Heart right ventricle (tissue), 16 donors: ENCODE measurements at regions of chr7 and their contacts with region 1.

Region 1: GRCh38 chr7:75928331-75928909 is 13.5 kb downstream of the POR start:
- DNase-seq: no peak
- ATAC-seq: peak in 1 of 8 donors; percentile 19
- H3K4me3 ChIP-seq: no peak overlapping the region
- H3K27ac ChIP-seq: no peak overlapping the region
- H3K4me1 ChIP-seq: peaks cover 0 to 35% (median 21%) of the 10 kb centered on the region in 9 donors
- H3K27me3 ChIP-seq: no peaks in the 10 kb centered on the region
- CTCF ChIP-seq: no peak

Region 2: DNA sequence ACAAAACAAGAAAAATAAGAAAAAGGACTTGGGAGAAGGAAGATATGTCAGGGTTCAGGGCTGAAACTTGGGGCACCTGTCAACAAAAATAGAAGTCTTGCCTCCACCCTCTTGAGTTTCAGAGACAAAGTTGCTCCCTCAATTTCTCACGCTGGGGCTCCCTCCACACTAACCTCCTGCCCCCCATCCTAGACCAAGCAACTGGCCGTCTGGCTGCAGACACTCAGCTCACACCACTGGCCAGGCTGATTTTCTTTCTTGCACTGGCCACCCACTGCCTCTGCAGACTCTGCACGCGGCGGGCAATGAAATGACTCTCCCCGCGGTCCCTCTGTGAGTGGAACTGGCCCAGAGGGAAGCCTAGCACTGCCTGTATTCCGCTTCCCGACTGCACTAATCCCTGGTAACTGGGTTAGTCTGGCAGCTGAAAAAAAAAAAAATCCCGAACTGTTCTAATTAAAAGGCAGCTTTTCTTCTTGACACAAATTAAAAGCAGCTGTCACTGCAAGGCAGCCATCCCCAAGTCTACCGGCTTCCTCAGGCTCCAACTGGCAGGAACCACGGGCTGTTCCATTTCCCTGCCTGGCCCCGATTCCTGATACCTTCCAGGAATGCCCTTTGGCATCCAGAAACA is 352.8 kb before region 1 on chr7:
- intact Hi-C with region 1: no loop called
- DNase-seq: no peak
- ATAC-seq: no peak
- H3K4me3 ChIP-seq: no peak overlapping the region
- H3K27ac ChIP-seq: no peak overlapping the region
- H3K4me1 ChIP-seq: no peaks in the 10 kb centered on the region
- H3K27me3 ChIP-seq: no peaks in the 10 kb centered on the region
- CTCF ChIP-seq: no peak

Region 3: DNA sequence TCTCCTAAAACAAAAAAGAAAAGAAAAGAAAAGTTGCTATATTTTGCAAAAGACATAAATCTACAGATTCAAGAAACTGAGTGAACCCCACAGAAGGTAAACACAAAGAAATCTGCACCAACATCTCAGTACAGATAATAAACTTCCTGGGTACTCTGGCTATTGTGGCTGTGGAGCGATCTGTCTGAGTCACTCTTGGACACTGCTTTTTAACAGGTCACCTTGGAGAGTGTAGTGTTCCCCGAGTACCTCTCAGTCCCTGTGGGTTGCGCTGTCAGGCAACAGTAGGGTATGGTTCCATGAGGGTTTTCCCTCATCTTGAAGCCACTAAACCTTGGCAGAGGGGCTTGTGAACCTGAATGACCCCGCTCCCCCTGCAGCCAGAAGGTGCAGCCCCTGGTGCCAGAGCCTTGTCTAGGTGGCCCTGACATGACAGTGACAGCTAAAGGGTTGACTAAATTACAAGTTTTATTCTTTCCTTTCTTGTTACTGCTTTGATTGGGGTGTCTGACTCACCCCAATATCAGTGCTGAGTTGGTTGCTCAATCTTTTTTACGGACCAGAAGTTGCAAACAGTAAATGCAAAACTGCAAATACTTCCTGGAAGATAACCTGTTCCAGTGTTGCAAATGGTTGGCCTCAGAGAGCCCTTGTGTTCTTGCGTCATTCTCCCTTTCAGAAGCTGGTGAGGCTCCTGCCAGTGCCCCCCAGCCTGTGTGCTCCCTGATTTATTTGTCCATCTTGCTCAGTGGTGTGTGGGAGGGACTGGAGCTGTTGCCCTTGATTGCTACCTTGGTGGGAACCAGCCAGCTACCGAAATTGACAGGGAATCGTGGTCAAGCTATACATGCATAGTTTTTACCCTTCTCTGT is 17.1 kb after region 1 on chr7:
- intact Hi-C with region 1: loop called in 1 of 10 experiments (anchors 2 kb)
- DNase-seq: no peak
- ATAC-seq: peak; percentile 74 to 89 (median 82)
- H3K4me3 ChIP-seq: no peak overlapping the region
- H3K27ac ChIP-seq: peak overlapping the region in 9 of 10 donors; percentile 12 to 73 (median 49)
- H3K4me1 ChIP-seq: peaks cover 0 to 54% (median 17%) of the 10 kb centered on the region in 9 donors
- H3K27me3 ChIP-seq: no peaks in the 10 kb centered on the region
- CTCF ChIP-seq: peak in 6 of 9 donors; percentile 17 to 48 (median 35)

Region 4: DNA sequence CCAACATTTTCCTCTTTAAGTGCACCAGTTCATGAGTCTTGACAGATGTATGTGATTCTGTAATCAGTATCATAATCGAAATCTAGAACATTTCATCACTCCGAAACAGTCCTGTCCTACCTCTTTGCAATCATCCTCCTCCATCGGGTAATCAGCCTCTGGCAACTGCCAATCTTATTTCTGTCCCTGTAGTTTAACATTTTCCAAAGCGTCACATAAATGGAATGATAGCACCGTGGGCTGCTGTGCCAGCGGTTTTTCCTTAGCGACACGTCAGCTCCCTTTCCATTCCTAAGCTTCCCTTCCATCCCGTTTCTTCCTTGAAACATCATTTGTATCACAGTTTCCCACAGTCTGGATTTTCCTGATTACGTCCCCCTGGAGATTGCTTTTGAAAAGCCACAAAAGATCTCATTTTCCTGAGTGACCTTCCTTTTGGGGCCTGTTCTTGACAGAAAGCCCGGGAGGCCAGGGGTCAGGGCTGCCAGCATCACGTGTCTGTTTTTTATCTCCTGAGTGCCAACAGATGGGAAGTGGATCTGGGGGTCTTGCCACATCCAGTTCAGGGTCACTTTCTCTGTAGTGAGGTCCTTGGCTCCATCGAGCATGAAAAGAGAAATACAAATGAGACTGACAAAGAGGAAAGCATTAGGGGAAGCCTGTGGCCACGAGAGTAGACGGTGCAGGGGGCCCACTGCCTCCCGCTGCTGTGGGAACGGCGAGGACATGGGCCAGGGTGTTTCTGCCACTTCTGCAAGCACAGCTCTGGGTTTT is 34.4 kb after region 1 on chr7:
- intact Hi-C with region 1: no loop called
- DNase-seq: peak; percentile 56 to 70
- ATAC-seq: peak; percentile 2 to 55 (median 32)
- H3K4me3 ChIP-seq: no peak overlapping the region
- H3K27ac ChIP-seq: peak overlapping the region; percentile 78 to 95 (median 85)
- H3K4me1 ChIP-seq: peaks cover 33 to 64% (median 53%) of the 10 kb centered on the region in 9 donors
- H3K27me3 ChIP-seq: no peaks in the 10 kb centered on the region
- CTCF ChIP-seq: no peak